H1 (cell line): ENCODE measurements at regions of chr7 and their contacts with region 1.

Region 1: DNA sequence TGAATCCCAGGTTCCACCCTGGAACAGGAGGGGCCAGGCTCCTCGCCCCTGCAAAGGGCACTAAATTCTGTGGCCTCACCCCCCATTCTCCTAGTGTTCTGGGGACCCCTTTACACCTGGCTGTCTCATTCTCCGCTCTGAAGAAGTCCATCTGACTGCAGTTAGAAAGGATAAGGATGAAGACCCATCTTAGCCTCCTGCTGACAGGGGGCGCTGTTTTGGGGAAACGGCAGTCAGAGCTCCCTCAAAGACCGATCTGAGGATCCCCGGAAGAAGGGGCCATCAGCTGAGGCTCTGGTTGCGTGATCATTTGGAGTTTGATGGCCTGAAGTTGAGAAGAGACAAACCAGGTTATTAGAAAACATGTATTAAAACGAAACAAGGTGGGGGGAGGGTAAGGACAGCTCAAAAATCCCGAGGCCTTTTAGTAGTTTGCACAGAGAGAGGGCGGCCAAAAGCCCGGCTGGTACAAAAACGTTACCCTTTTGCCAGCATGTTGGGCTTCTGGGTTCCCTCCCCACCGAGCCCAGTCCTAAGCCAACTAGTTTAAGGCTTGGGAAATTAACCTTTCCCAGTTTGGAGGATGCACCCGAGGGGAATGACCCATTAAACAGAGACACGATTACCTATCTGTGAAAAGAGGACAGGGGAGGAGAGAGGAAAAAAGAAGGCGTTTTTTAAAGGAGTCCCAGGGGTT is 102.8 kb downstream of the CHN2 start:
- DNase-seq: peak in 1 of 2 experiments; percentile 86
- H3K4me3 ChIP-seq: no peak overlapping the region
- H3K27ac ChIP-seq: no peak overlapping the region
- H3K4me1 ChIP-seq: peaks cover 14 to 28% (median 18%) of the 10 kb centered on the region in 4 experiments
- H3K27me3 ChIP-seq: no peaks in the 10 kb centered on the region
- CTCF ChIP-seq: peak; percentile 58 to 82 (median 65)
- EP300 ChIP-seq: no peak
- POLR2A ChIP-seq: no peak
- RAD21 ChIP-seq: peak; percentile 21 to 63; a peak in 3 of 4 replicates

Region 2: DNA sequence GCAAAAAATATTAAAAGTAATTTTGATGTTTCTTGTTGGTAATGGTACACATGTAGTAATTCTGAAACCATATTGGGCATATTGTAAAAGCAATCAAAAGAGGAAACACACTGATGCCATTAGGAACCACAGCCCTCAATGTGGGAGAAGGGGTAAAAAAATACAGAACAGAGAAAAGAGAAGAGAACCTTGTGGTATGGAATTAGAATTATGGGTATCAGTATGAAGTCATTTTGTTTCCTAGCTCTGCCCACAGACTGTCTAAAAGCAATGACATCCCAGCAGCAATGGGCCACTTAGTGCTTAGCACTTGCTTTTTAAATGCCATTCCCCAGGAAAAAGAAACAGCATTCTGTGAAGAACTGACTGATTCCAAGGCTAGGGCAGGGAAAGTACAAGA is 212.5 kb before region 1 on chr7:
- CTCF ChIA-PET with region 1: no interaction called
- POLR2A ChIA-PET with region 1: no interaction called
- DNase-seq: no peak
- H3K4me3 ChIP-seq: no peak overlapping the region
- H3K27ac ChIP-seq: no peak overlapping the region
- H3K4me1 ChIP-seq: no peaks in the 10 kb centered on the region; a peak in 1 of 7 replicates
- H3K27me3 ChIP-seq: no peaks in the 10 kb centered on the region
- CTCF ChIP-seq: no peak
- EP300 ChIP-seq: no peak
- POLR2A ChIP-seq: no peak
- RAD21 ChIP-seq: no peak

Region 3: GRCh38 chr7:29285444-29285793 is 11.9 kb before region 1 on chr7:
- CTCF ChIA-PET with region 1: interaction called, 67 read pairs
- POLR2A ChIA-PET with region 1: interaction called, 3 read pairs
- DNase-seq: peak in 1 of 2 experiments; percentile 6
- H3K4me3 ChIP-seq: no peak overlapping the region
- H3K27ac ChIP-seq: no peak overlapping the region
- H3K4me1 ChIP-seq: peaks cover 4 to 20% (median 16%) of the 10 kb centered on the region in 4 experiments
- H3K27me3 ChIP-seq: no peaks in the 10 kb centered on the region
- CTCF ChIP-seq: no peak
- EP300 ChIP-seq: no peak
- POLR2A ChIP-seq: no peak
- RAD21 ChIP-seq: no peak